ENCODE measurements at regions of chr1 and their contacts with region 1.

Region 1: DNA sequence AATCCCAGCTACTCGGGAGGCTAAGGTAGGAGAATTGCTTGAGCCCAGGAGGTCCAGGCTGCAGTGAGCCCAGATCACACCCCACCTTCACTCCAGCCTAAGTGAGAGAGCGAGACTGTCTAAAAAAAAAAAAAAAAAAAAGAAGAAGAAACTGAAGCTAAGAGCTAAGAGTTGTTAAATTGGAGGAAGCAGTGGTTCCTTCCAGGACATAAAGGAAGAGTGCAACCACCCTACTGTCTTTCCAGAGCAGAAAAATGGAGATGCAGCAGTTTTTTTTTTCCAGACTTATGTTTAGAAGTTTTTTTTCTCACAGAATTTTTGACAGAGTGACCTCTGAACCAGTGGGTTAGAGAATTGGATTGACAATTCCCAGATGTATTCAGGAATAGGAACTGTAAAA is 88.7 kb downstream of the HLX start:
- DNase-seq: no peak
- H3K4me3 ChIP-seq: no peak overlapping the region
- H3K27ac ChIP-seq: no peak overlapping the region
- H3K4me1 ChIP-seq: no peaks in the 10 kb centered on the region
- H3K27me3 ChIP-seq: no peaks in the 10 kb centered on the region
- CTCF ChIP-seq: no peak

Region 2: DNA sequence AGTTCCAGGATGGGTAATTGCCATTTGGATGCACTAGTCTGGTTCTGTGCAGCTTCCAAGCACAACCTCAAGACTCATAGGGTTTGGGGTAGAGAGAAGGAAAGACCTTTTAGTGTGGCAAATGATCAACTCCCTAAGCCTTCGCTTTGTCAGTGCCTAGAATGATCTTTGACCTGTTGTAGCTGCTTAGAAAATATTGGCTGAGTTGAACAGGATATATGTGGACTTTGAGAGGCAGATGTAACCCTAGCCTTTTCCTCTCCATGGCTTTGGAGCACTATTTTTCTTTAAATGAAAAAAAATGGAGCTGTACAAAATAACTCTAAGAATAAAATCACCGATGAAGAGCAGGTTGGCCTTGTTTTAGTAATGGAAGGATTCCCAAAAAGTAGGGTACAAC is 46.9 kb before region 1 on chr1:
- CTCF ChIA-PET with region 1: interaction called, 20 read pairs
- dilution Hi-C with region 1: no loop called
- in situ Hi-C with region 1: no loop called
- intact Hi-C with region 1: no loop called
- DNase-seq: no peak
- H3K4me3 ChIP-seq: no peak overlapping the region
- H3K27ac ChIP-seq: no peak overlapping the region
- H3K4me1 ChIP-seq: no peaks in the 10 kb centered on the region
- H3K27me3 ChIP-seq: peaks cover 9% of the 10 kb centered on the region
- CTCF ChIP-seq: no peak

Region 3: DNA sequence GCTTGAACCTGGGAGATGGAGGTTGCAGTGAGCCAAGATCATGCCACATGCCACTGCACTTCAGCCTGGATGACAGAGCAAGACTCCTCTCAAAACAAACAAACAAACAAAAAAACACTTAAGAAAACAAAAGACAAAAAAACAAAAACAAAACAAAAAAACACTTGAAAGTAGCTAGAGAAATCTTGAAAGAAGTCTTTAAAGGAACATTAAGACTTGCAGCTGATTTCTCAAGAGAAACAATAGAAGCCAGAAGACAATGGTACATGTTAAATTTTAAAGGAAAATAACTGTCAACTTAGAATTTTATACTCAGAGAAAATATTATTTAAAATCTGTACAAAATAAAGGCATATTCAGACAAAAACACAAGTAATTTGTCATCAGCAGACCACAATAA is 17.3 kb before region 1 on chr1:
- CTCF ChIA-PET with region 1: no interaction called
- dilution Hi-C with region 1: no loop called
- in situ Hi-C with region 1: no loop called
- intact Hi-C with region 1: no loop called
- DNase-seq: no peak
- H3K4me3 ChIP-seq: no peak overlapping the region
- H3K27ac ChIP-seq: no peak overlapping the region
- H3K4me1 ChIP-seq: no peaks in the 10 kb centered on the region
- H3K27me3 ChIP-seq: no peaks in the 10 kb centered on the region
- CTCF ChIP-seq: no peak

Region 4: DNA sequence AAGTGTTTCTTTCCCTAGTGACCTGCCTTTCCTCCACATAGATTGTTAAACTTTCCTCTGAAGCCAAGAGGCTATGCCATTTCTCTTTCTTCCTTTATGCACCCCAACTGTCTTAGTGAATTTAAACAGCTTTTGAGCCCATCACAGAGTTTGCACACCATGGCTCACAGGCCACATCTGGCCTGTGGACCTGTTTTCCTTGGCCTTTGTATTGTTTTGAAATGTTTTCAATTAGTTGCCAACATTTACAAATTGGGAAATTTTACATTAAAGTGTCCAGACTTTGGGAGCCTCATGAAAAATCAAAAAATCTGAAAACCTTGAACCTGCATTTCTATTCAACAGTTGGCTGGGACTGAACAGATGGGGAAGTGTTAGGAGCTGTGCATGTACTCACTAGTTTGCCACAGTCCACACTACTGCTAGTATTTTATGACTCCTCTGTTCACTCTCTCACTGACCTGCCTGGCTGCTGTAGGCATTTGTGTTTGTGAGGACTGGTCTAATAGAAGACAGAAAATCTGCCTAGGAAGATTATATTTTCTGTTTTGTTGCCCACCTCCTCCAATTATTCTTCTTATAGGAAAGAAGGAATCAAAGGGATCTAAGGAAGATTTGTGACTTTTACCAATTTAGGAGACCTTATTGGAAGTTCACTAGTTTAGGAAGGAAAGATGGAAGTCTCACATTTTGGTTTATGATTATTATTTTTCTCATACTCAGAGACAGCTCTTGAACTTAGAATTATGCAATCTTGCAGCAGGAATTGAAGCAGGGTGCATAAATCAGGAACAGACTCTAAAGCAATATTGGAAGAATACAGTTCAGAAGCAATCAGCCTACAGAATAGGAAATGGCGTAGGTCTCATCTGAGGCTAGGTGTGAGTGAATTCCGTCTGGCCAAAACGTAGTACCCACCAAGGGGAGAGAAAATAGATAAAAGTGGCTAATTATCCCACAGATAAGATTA is 46.1 kb after region 1 on chr1:
- CTCF ChIA-PET with region 1: no interaction called
- dilution Hi-C with region 1: no loop called
- in situ Hi-C with region 1: no loop called
- intact Hi-C with region 1: no loop called
- DNase-seq: no peak
- H3K4me3 ChIP-seq: no peak overlapping the region
- H3K27ac ChIP-seq: no peak overlapping the region
- H3K4me1 ChIP-seq: no peaks in the 10 kb centered on the region
- H3K27me3 ChIP-seq: peaks cover 4% of the 10 kb centered on the region
- CTCF ChIP-seq: no peak